Heart right ventricle (tissue), 16 donors: ENCODE measurements at regions of chr6 and their contacts with region 1.

Region 1: DNA sequence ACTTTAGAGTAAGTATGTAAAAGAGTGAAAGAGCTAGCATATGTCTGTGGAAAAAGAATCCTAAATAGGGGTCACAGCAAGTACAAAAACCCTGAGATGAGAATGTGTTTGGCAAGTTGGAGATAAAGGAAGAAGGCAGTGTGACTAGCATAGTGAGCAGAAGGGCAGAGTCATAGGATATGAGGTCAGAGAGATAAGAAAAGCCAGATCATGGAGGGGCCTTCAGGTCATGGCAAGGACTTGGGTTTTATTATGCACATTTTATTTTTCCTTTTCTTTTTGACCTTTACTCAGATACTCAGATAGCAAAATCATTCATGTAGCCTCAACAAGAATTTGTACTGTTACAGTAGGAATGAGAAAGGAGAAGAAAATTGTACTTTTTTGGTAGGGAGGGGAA is 138.0 kb downstream of the GJA1 start:
- DNase-seq: no peak
- ATAC-seq: peak in 6 of 8 donors; percentile 67 to 85 (median 78)
- H3K4me3 ChIP-seq: no peak overlapping the region
- H3K27ac ChIP-seq: peak overlapping the region in 7 of 10 donors; percentile 37 to 74 (median 44)
- H3K4me1 ChIP-seq: peaks cover 0 to 18% (median 14%) of the 10 kb centered on the region in 9 donors
- H3K27me3 ChIP-seq: no peaks in the 10 kb centered on the region
- CTCF ChIP-seq: no peak

Region 2: DNA sequence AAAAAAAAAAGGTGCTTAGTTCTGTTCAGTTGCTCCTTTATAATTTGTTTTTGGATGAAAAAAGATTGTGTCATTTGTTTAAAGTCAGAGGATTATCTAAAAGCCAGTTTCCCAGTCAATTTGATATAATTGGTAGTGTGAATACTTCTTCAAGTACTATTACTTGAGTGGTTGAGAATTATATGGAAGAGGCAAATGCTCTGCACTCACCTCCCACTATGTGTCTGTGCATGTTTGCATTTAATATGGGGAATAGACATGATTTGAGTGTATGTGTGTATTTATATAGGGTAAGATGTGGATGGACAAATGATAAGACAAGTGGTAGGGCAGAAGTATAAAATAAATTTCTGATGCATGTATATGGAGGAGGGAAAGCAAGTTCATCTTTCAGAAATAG is 122.2 kb before region 1 on chr6:
- intact Hi-C with region 1: loop called in 1 of 10 experiments (anchors 10 kb)
- DNase-seq: no peak
- ATAC-seq: no peak
- H3K4me3 ChIP-seq: no peak overlapping the region
- H3K27ac ChIP-seq: no peak overlapping the region
- H3K4me1 ChIP-seq: peaks cover 0 to 27% (median 5%) of the 10 kb centered on the region in 9 donors
- H3K27me3 ChIP-seq: no peaks in the 10 kb centered on the region
- CTCF ChIP-seq: no peak

Region 3: DNA sequence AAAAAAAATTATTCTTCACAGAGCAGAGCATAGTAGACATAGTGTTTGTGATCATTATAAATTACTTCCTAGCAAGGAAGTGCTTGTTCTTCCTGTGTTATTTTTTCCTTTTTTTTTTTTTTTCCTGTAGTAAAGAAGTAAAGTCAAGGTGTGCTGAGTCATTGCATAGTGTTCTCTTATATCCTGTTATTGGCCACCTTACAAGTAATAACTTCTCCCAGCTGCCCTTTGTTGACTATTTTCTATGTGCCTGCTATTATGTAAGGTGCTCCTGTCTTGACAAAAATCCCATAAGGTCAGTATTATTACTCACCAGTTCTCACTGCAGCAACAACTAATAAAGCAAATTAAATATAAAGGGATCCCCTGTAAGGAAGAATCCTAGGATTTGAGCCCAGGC is 57.2 kb after region 1 on chr6:
- intact Hi-C with region 1: no loop called
- DNase-seq: no peak
- ATAC-seq: peak in 2 of 8 donors; percentile 44 to 56
- H3K4me3 ChIP-seq: no peak overlapping the region
- H3K27ac ChIP-seq: no peak overlapping the region
- H3K4me1 ChIP-seq: peaks cover 0 to 10% (median 0%) of the 10 kb centered on the region in 9 donors
- H3K27me3 ChIP-seq: no peaks in the 10 kb centered on the region
- CTCF ChIP-seq: no peak